ENCODE measurements at regions of chr6 and their contacts with region 1.

Region 1: DNA sequence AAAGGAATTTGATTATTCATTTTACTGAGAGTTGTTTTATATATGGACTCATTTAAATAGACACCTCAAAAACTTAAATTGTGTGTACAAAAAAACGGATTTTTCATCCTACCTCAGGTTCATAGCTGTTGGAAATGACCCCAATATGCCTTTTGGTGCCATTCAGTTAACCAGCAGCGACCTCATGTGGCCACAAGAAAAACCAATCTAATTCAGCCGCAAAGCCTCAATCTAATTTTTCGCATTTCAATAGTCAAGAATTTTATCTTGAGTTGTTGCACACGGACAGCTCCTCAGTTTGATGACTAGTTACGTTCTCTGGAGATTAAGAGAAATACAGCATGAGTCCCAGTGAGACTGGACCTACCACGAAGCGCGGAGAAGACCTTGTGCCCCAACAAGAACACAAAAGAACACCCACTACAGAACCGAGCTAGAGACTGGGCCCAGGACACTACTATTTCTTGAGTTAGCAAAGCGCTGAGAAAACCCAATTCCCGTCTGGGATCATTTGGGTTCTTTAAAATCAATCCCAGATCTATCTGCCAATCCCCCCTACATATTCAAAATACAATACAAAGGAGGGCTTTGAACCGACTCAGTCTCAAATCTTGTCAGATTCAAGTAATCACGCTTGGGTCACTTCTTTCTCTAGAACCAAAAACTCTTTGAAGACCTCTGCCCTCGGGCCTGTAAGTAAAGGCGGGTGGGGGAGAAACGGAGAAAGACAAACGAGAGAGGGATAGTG is 1.1 kb downstream of the TCP11 start:
- DNase-seq: peak; percentile 38 to 55
- H3K4me3 ChIP-seq: no peak overlapping the region
- H3K27ac ChIP-seq: no peak overlapping the region
- H3K4me1 ChIP-seq: peaks cover 0 to 6% of the 10 kb centered on the region in 2 donors
- H3K27me3 ChIP-seq: no peaks in the 10 kb centered on the region
- CTCF ChIP-seq: peak; percentile 40 to 95 (median 87)
- POLR2A ChIP-seq: no peak

Region 2: GRCh38 chr6:34986845-34987246 is 153.2 kb before region 1 on chr6:
- intact Hi-C with region 1: loop called (anchors 2 kb)
- DNase-seq: peak; percentile 77 to 81
- H3K4me3 ChIP-seq: no peak overlapping the region
- H3K27ac ChIP-seq: peak overlapping the region in 1 of 3 donors; percentile 32
- H3K4me1 ChIP-seq: peaks cover 17 to 34% of the 10 kb centered on the region in 2 donors
- H3K27me3 ChIP-seq: no peaks in the 10 kb centered on the region
- CTCF ChIP-seq: peak; percentile 66 to 92 (median 88)
- POLR2A ChIP-seq: no peak

Region 3: GRCh38 chr6:35076997-35077712 is 62.9 kb before region 1 on chr6:
- intact Hi-C with region 1: loop called (anchors 10 kb)
- DNase-seq: no peak
- H3K4me3 ChIP-seq: no peak overlapping the region
- H3K27ac ChIP-seq: no peak overlapping the region
- H3K4me1 ChIP-seq: peaks cover 0 to 2% of the 10 kb centered on the region in 2 donors
- H3K27me3 ChIP-seq: no peaks in the 10 kb centered on the region
- CTCF ChIP-seq: no peak
- POLR2A ChIP-seq: no peak

Region 4: GRCh38 chr6:35209081-35209480 is 69.0 kb after region 1 on chr6:
- intact Hi-C with region 1: loop called (anchors 5 kb)
- DNase-seq: peak; percentile 59 to 83
- H3K4me3 ChIP-seq: no peak overlapping the region
- H3K27ac ChIP-seq: peak overlapping the region; percentile 20 to 45 (median 24)
- H3K4me1 ChIP-seq: peaks cover 6 to 25% of the 10 kb centered on the region in 2 donors
- H3K27me3 ChIP-seq: no peaks in the 10 kb centered on the region
- CTCF ChIP-seq: no peak
- POLR2A ChIP-seq: no peak

Region 5: GRCh38 chr6:35302604-35303241 is 162.6 kb after region 1 on chr6:
- intact Hi-C with region 1: no loop called
- DNase-seq: no peak
- H3K4me3 ChIP-seq: no peak overlapping the region
- H3K27ac ChIP-seq: no peak overlapping the region
- H3K4me1 ChIP-seq: peaks cover 3 to 8% of the 10 kb centered on the region in 2 donors
- H3K27me3 ChIP-seq: no peaks in the 10 kb centered on the region
- CTCF ChIP-seq: no peak
- POLR2A ChIP-seq: no peak

Measured in thyroid gland (tissue), 4 donors.